ENCODE measurements at regions of chr2 and their contacts with region 1.

Region 1: GRCh38 chr2:47767880-47768609 is 14.9 kb upstream of the MSH6 start:
- DNase-seq: peak; percentile 60
- ATAC-seq: peak; percentile 85 to 92

Region 2: DNA sequence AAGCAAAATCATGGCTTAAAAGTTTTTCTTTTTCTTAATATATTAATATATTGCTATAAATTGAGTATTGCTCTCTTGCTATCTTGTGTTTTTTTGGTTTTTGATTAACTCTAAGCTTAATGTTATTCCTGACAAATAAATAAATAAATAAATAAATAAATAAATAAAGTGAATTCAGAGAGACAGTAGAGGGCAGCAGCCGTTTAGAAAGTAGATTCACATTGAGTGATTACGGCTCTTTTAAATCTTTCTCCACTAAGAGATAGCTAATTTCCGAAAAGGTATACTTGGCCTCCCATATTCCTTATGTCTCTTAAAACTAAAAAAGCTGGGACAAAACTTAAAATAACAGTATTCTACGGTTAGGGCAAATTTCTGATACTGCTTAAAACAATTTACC is 330.8 kb before region 1 on chr2:
- intact Hi-C with region 1: loop called (anchors 1 to 5 kb)
- DNase-seq: no peak
- ATAC-seq: peak; percentile 32 to 74